ENCODE measurements at regions of chr3 and their contacts with region 1.

Region 1: DNA sequence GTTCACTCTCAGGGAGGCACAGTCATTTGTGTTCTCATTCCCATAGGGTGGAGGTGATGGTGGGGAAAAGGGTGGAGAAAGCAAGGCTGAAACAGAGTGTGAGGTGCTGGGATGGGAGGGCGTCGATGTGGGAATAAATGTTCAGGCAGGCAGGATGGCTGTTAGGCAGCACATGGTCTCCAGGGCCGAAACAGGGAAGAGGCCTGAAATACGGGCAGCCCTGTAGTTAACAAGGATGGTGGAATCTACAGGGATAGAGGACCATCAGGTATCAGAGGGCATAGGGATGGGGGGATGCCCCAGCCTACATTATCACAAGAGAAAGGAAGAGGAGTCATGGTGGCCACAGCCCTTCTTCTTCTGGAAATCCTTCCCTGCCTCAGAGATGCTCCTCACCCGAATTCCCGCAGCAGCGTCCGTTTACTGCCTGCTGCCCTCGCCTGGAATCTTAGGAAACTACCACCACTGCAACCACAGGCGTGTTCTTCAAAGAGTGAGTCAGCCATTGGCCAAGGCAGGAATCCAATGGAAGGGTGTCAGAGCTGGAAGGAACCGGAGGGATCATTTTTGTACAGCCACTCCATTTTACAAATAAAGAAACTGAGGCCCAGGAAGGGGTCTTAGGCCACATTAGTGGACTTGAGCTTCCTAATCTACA is 49.7 kb upstream of the POMGNT2 start:
- DNase-seq: peak in 5 of 6 donors; percentile 46 to 78 (median 56)
- ATAC-seq: peak; percentile 92 to 97 (median 95)
- H3K4me3 ChIP-seq: no peak overlapping the region
- H3K27ac ChIP-seq: no peak overlapping the region
- H3K4me1 ChIP-seq: no peaks in the 10 kb centered on the region
- H3K27me3 ChIP-seq: no peaks in the 10 kb centered on the region
- CTCF ChIP-seq: peak; percentile 36 to 62 (median 40)

Region 2: DNA sequence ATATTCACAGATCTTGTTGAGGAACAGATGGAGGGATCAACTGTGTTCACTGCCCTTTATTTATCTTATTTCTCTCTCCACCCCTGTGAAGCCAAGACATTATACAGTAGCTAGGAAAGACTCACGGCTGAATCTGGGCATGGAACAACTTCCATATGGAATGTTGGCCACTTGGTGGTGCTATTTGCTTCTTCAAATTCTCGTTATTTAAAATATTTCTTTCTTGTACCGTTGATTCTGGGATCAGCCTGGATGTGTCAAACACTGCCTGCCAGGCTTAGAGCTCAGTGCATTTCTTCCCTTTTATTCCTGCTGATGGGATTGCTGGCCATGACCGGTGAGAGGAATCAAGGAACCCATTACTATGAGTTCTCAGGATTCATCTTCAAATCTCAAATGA is 194.0 kb before region 1 on chr3:
- intact Hi-C with region 1: loop called in 2 of 3 experiments (anchors 10 kb)
- DNase-seq: peak in 1 of 6 donors; percentile 50
- ATAC-seq: peak; percentile 56 to 81 (median 79)
- H3K4me3 ChIP-seq: no peak overlapping the region
- H3K27ac ChIP-seq: no peak overlapping the region
- H3K4me1 ChIP-seq: no peaks in the 10 kb centered on the region
- H3K27me3 ChIP-seq: no peaks in the 10 kb centered on the region
- CTCF ChIP-seq: peak; percentile 31 to 59 (median 42)

Region 3: GRCh38 chr3:43378066-43378935 is 222.7 kb after region 1 on chr3:
- intact Hi-C with region 1: loop called in 1 of 3 experiments (anchors 5 kb)
- DNase-seq: peak in 4 of 6 donors; percentile 48 to 71 (median 54)
- ATAC-seq: peak; percentile 85 to 99 (median 96)
- H3K4me3 ChIP-seq: no peak overlapping the region
- H3K27ac ChIP-seq: no peak overlapping the region
- H3K4me1 ChIP-seq: peaks cover 0 to 6% (median 0%) of the 10 kb centered on the region in 3 donors
- H3K27me3 ChIP-seq: no peaks in the 10 kb centered on the region
- CTCF ChIP-seq: peak; percentile 60 to 74 (median 72)